ENCODE measurements at regions of chr5 and their contacts with region 1.

Region 1: GRCh38 chr5:119267958-119268386 is 87.8 kb upstream of the TNFAIP8 start:
- DNase-seq: peak; percentile 93
- ATAC-seq: peak; percentile 75
- H3K4me3 Mint-ChIP-seq: peak overlapping the region; percentile 96
- H3K27ac Mint-ChIP-seq: peak overlapping the region; percentile 96
- H3K4me1 Mint-ChIP-seq: peaks cover 63% of the 10 kb centered on the region
- H3K27me3 Mint-ChIP-seq: no peaks in the 10 kb centered on the region

Region 2: DNA sequence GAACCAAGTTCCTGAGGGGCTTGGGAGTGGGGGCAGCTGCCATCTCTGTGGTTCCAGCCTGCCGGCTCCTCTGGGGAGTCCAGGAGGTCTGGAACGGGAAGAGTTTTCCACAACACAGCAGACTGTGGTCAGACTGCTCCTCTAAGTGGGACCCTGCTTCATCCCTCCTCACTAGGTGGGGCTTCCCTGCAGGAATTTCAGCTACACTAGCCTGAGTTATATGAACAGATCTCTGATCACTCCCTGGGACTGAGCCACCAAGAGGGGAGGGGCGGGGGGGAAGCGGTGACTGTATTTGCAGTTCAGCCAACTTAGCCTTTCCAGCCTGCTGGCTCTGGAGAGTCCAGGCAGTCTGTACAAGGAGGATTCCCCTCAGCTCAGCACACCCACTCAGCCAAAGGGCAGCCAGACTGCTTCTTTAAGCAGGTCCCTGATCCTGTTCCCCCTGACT is 299.0 kb before region 1 on chr5:
- CTCF ChIA-PET with region 1: no interaction called
- POLR2A ChIA-PET with region 1: no interaction called
- intact Hi-C with region 1: no loop called
- DNase-seq: no peak
- ATAC-seq: no peak
- H3K4me3 Mint-ChIP-seq: no peak overlapping the region
- H3K27ac Mint-ChIP-seq: no peak overlapping the region
- H3K4me1 Mint-ChIP-seq: no peaks in the 10 kb centered on the region
- H3K27me3 Mint-ChIP-seq: no peaks in the 10 kb centered on the region

Region 3: DNA sequence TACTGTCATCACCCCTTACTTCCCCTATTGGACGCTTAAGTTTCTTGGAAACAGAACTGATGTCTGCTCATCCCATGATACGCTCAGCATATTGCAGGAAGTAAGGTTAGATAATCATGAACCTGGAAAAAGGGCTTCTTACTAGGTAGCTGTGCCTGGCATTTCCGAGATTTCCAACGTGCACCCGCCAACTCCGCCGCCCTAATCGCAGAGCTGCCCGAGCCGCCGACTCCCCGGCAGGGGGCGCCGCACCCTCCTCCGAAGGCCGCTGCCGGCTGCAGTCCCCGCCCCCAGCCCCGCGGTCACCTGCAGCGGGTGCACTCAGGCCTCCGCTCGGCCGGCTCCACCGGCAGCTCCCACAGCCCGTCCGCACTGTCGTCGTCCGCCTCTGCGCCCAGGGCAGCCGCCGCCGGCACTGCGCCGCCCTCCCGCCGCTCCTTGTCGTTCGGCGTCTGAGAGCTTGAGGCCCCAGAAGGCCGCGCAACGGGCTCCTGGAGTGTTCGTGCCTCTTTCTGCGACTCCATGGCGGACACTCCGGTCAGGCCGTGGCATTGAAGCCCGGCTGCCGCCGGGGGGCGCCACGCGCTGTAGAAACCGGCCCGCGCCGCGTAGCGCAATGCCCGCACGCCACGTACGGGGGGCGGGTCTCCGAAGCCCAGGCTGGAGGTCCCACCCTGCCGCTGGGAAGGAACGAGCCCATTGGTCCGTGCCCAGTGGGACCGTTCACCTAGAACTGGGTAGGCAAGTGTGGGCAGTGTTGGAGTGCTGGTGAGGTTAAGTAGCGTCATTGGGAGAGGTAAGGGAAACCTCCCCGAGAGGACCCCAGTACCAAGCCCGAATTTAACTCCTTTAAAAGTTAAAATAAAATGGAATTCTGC is 279.7 kb before region 1 on chr5 and contains the start of gene DTWD2:
- CTCF ChIA-PET with region 1: interaction called, 17 read pairs
- POLR2A ChIA-PET with region 1: no interaction called
- intact Hi-C with region 1: loop called (anchors 1 kb)
- DNase-seq: peak; percentile 96
- ATAC-seq: peak; percentile 90
- H3K4me3 Mint-ChIP-seq: peak within 1 kb of the TSS; percentile 63
- H3K27ac Mint-ChIP-seq: peak within 1 kb of the TSS; percentile 34
- H3K4me1 Mint-ChIP-seq: peaks cover 23% of the 10 kb centered on the region
- H3K27me3 Mint-ChIP-seq: peaks cover 1% of the 10 kb centered on the region
- total RNA-seq, gene DTWD2: 3.6 to 4.5 TPM

Region 4: GRCh38 chr5:119079318-119079921 is 188.6 kb before region 1 on chr5:
- CTCF ChIA-PET with region 1: interaction called, 3 read pairs
- POLR2A ChIA-PET with region 1: no interaction called
- intact Hi-C with region 1: loop called in 1 of 2 experiments (anchors 2 kb)
- DNase-seq: peak; percentile 70
- ATAC-seq: peak; percentile 92
- H3K4me3 Mint-ChIP-seq: peak overlapping the region; percentile 33
- H3K27ac Mint-ChIP-seq: peak overlapping the region; percentile 59
- H3K4me1 Mint-ChIP-seq: peaks cover 50% of the 10 kb centered on the region
- H3K27me3 Mint-ChIP-seq: no peaks in the 10 kb centered on the region

Region 5: DNA sequence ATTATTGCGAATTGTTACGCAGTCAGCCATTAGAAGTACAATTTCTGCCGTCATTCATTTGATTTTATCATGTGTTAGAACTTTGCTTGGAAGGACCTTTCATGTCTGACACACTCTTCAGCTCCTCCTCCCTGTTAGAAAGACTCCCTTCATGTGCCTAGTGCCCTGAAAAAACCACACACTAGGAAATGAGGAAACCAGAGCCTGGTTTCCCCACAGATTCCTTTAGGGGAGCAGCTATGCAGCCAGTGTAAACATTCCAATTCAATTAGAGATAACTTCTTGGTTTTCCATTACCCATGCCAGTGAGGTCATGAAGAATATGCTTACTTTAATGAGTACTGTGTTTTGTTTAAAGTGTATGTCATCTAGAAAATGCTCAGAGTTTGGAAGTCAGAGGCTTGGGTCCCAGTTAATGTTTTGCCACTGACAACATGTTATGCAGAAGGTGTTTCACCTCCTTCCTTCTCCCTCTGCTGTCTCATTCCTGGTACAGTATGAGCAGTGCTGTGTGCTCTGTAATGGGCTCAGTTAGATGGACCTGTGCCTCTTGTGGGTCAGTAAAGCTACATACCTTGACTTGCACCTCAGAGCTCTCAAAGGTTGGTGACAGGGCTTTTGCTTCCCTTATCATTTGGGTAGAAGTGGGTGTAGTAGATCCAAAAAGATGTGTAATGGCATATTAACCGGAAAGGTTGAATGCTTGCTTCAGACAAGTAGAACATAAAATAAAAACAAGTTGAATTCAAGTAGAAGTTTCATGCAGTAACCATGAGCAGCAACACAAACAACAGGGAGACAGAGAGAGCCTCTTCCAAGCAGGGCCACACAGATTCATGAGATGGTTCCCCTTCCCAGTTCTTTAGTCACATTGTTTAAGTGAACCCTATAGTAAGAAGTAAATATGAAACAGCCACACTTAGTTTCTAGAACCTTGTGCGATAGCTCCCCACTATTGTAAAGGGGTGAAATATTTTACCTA is 35.2 kb after region 1 on chr5:
- CTCF ChIA-PET with region 1: interaction called, 7 read pairs
- POLR2A ChIA-PET with region 1: interaction called, 4 read pairs
- intact Hi-C with region 1: loop called in 1 of 2 experiments (anchors 2 kb)
- DNase-seq: no peak
- ATAC-seq: peak; percentile 68
- H3K4me3 Mint-ChIP-seq: peak overlapping the region; percentile 12
- H3K27ac Mint-ChIP-seq: peak overlapping the region; percentile 84
- H3K4me1 Mint-ChIP-seq: peaks cover 90% of the 10 kb centered on the region
- H3K27me3 Mint-ChIP-seq: no peaks in the 10 kb centered on the region

Region 6: DNA sequence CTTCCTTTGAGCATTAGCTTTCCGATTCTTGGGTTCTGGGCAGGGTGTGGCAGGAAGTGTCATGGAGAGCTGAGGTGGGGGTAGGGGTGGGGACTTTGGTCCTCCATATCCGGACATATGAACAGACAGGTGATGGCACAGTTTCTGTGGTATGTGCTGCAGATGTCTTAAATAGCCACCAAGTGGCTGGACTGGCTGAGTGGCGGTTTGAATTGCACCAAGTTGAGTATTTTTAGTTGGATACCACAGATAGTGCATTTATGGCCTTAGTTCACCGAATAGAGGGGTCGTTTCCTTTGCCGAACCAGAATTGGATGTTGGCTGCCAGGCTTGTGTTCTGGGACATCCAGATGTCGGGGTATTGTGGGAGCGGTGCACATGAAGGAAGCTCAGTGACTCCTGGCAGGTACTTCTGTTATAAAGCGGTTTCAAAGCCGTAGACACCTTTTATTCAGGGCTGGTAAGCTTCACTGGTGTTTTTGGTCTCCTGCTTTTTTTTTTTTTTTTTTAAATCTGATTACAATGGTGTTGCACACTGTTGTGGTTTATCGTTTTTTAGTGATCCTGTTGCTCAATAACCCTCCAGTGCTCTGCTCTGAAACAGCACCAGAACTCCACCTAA is 72.7 kb after region 1 on chr5:
- CTCF ChIA-PET with region 1: interaction called, 17 read pairs
- POLR2A ChIA-PET with region 1: interaction called, 6 read pairs
- intact Hi-C with region 1: loop called (anchors 2 to 5 kb)
- DNase-seq: peak; percentile 71
- ATAC-seq: peak; percentile 14
- H3K4me3 Mint-ChIP-seq: peak overlapping the region; percentile 71
- H3K27ac Mint-ChIP-seq: peak overlapping the region; percentile 96
- H3K4me1 Mint-ChIP-seq: peaks cover 98% of the 10 kb centered on the region
- H3K27me3 Mint-ChIP-seq: no peaks in the 10 kb centered on the region

Region 7: DNA sequence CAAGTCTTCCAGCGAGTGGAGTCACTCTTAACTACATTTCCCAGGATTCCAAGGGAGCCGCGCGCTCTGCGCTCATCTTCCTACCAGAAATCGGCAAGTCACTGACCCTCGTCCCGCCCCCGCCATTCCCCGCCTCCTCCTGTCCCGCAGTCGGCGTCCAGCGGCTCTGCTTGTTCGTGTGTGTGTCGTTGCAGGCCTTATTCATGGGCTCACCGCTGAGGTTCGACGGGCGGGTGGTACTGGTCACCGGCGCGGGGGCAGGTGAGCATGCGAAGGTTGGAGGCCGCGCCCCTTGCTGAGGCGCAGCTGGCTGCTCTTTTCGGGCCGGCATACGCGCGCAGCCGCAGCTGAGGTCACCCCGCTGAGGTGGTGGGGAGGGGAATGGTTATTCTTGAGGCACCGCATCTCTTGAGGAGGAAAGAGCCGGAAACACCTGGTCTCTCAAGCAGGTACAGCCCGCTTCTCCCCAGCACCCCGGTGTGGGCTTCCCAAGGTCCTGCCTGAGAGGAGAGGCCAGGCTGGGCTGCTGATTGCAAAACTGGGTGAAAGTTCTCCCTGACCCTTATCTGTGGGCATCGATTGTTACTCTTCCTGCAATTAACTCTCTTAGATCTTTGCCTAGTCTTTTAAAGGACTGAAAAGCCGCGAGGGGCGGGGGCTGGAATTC is 184.5 kb after region 1 on chr5 and contains the start of gene HSD17B4:
- CTCF ChIA-PET with region 1: interaction called, 3 read pairs
- POLR2A ChIA-PET with region 1: no interaction called
- intact Hi-C with region 1: loop called in 1 of 2 experiments (anchors 1 kb)
- DNase-seq: peak; percentile 90
- ATAC-seq: peak; percentile 96
- H3K4me3 Mint-ChIP-seq: peak within 1 kb of the TSS; percentile 86
- H3K27ac Mint-ChIP-seq: peak within 1 kb of the TSS; percentile 87
- H3K4me1 Mint-ChIP-seq: peaks cover 16% of the 10 kb centered on the region
- H3K27me3 Mint-ChIP-seq: peaks cover 3% of the 10 kb centered on the region
- total RNA-seq, gene HSD17B4: 92.3 to 113 TPM

Measured in activated CD4-positive, alpha-beta T cell treated with anti-CD3 and anti-CD28 coated beads for 36 hours (primary cell).